Activated naive CD8-positive, alpha-beta T cell treated with anti-CD3 and anti-CD28 coated beads, Interleukin-2, amount 10 ng/mL, durations not matched to agents 7 days and 5 days (primary cell): ENCODE measurements at regions of chr9 and their contacts with region 1.

Region 1: GRCh38 chr9:93453047-93453914 is at the start of gene FAM120AOS:
- DNase-seq: peak; percentile 78
- ATAC-seq: peak; percentile 61
- H3K4me3 Mint-ChIP-seq: peak within 1 kb of the TSS; percentile 98
- H3K27ac Mint-ChIP-seq: peak within 1 kb of the TSS; percentile 94
- H3K4me1 Mint-ChIP-seq: peaks cover 44% of the 10 kb centered on the region
- H3K27me3 Mint-ChIP-seq: no peaks in the 10 kb centered on the region
- total RNA-seq, gene FAM120AOS: 39.8 to 41.6 TPM

Region 2: DNA sequence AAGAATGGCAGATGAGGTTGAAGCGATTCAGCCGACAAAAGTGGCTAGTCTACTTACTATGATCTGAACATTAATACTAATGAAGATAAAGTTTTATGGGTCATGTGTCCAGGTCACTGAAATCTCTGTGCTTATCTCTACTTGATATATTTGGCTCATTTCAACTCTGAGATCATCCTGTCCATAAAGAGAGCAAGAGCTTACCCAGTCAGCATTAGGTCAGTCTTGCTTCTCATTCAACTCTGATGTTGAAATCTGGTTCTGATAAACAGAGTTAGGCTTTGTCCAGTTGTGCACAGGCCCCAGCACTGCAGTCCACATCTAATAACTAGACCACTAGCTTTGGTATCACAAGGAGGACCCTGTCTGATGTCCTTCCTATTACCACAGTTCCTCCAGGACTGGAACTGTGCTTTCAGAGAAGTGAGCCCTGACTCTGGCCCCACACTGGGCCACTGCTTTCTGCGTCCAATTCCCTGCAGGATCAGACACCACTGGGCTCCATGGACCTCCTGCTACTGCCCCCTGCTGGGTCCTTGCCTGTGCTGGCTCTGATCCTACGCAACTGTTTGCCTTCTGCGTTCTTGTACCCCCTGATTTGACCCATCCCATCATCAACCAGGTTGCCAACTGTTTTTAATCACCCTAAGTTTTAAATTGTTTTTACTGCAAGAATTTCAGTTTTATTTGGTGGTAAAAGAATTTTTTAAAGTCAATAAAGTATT is 25.5 kb before region 1 on chr9:
- POLR2A ChIA-PET with region 1: no interaction called
- DNase-seq: no peak
- ATAC-seq: no peak
- H3K4me3 Mint-ChIP-seq: no peak overlapping the region
- H3K27ac Mint-ChIP-seq: no peak overlapping the region
- H3K4me1 Mint-ChIP-seq: peaks cover 2% of the 10 kb centered on the region
- H3K27me3 Mint-ChIP-seq: peaks cover 17% of the 10 kb centered on the region

Region 3: DNA sequence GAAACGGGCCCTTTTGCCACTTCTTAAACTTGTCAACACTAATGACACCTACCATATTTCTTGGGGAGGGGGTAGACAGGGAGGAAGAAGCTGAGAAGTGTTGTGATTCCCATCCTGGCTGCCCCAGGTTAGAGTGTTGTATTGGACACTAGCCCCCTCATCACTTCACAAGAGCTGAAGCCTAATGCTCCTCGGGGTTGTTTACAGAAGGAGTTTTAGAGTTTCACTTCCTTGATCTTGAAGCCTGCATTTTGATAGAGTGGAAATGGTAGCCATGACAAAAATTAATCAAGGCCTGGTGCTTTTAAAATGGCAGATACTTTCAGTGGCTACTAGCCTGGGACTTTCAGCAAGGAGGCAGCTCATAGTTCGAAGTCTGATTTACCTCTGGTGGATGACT is 11.1 kb after region 1 on chr9:
- POLR2A ChIA-PET with region 1: interaction called, 45 read pairs
- DNase-seq: no peak
- ATAC-seq: no peak
- H3K4me3 Mint-ChIP-seq: peak overlapping the region; percentile 78
- H3K27ac Mint-ChIP-seq: peak overlapping the region; percentile 92
- H3K4me1 Mint-ChIP-seq: peaks cover 79% of the 10 kb centered on the region
- H3K27me3 Mint-ChIP-seq: no peaks in the 10 kb centered on the region

Region 4: GRCh38 chr9:93566408-93567270 is 113.4 kb after region 1 on chr9:
- POLR2A ChIA-PET with region 1: interaction called, 19 read pairs
- DNase-seq: peak; percentile 100
- ATAC-seq: peak; percentile 94
- H3K4me3 Mint-ChIP-seq: peak overlapping the region; percentile 89
- H3K27ac Mint-ChIP-seq: peak overlapping the region; percentile 92
- H3K4me1 Mint-ChIP-seq: peaks cover 9% of the 10 kb centered on the region
- H3K27me3 Mint-ChIP-seq: no peaks in the 10 kb centered on the region